ENCODE measurements at regions of chr19 and their contacts with region 1.

Region 1: DNA sequence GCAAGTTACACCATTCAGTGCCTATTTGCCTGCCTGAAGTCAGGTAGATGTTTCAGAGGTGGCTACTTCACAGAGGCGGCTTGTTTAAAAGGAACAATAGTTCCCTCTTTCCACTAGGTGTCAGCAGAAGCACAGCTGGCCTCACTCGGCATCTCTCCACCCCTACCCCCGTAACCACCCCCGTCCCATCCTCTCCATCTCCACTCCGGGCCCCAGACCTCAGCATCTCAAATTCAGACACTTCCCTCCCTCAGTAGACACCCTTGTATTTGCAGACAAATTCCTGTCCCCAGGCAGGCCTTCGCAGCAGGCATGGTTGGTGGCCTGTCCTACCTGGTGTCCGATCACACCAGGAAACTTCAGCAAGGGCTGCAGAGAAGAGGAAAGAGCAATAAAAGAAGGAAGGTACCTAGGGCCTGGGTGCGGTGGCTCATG is 9.1 kb upstream of the DPP9 start:
- DNase-seq: peak; percentile 85
- H3K4me3 Mint-ChIP-seq: peak overlapping the region; percentile 24
- H3K27ac Mint-ChIP-seq: no peak overlapping the region
- H3K4me1 Mint-ChIP-seq: peaks cover 9% of the 10 kb centered on the region
- H3K27me3 Mint-ChIP-seq: peaks cover 4% of the 10 kb centered on the region

Region 2: GRCh38 chr19:4768934-4769777 is 36.5 kb after region 1 on chr19:
- intact Hi-C with region 1: loop called (anchors 2 kb)
- DNase-seq: peak; percentile 95
- H3K4me3 Mint-ChIP-seq: no peak overlapping the region
- H3K27ac Mint-ChIP-seq: no peak overlapping the region
- H3K4me1 Mint-ChIP-seq: no peaks in the 10 kb centered on the region
- H3K27me3 Mint-ChIP-seq: peaks cover 2% of the 10 kb centered on the region

Region 3: GRCh38 chr19:4791170-4792018 is 58.7 kb after region 1 on chr19 and contains the start of gene FEM1A:
- intact Hi-C with region 1: loop called (anchors 1 kb)
- DNase-seq: peak; percentile 99
- H3K4me3 Mint-ChIP-seq: peak within 1 kb of the TSS; percentile 89
- H3K27ac Mint-ChIP-seq: peak within 1 kb of the TSS; percentile 91
- H3K4me1 Mint-ChIP-seq: peaks cover 14% of the 10 kb centered on the region
- H3K27me3 Mint-ChIP-seq: no peaks in the 10 kb centered on the region
- total RNA-seq, gene FEM1A: 22.9 and 23.3 TPM in 2 replicates

Region 4: DNA sequence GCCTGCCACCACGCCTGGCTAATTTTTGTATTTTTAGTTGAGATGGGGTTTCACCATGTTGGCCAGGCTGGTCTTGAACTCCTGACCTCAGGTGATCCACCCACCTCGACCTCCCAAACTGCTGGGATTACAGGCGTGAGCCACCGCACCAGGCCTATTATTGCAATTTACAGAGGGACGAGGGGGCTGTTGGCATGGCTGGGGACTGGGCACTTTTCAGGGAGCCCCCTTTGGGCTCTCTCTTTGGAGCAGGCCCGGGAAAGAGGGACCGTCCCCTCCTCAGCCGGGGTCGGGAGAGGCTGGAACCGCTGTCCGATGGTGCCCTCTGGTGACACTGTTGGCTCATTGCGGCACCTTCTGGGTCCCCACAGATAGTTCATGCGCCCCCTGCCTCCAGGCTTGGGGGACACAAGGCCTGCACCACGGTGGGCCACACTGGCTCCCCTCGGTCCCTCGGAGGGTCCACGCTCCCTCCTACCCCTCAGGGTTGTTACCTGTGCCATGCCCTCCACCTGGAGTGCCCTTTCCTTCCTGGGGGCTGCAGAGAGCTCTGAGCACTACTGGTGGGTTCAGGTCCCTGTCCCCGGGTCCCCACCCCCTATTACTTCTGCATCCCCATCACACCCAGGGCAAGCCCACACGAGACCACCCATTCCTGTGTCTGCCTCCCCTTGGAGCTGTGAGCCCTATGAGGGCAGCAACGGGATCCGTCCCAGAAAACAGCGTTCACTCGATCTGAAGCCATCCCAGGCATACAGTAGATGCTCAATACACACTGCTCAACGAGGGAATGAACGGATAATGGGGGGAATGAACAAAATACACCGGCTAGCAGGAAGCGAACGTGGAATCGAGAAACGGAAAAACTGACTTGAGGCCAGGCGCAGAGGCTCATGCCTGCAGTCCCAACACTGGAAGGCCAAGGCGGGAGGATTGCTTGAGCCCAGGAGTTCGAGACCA is 71.3 kb after region 1 on chr19:
- intact Hi-C with region 1: loop called (anchors 1 kb)
- DNase-seq: peak; percentile 90
- H3K4me3 Mint-ChIP-seq: no peak overlapping the region
- H3K27ac Mint-ChIP-seq: no peak overlapping the region
- H3K4me1 Mint-ChIP-seq: no peaks in the 10 kb centered on the region
- H3K27me3 Mint-ChIP-seq: no peaks in the 10 kb centered on the region